AG04449 (cell line): ENCODE measurements at regions of chr7 and their contacts with region 1.

Region 1: DNA sequence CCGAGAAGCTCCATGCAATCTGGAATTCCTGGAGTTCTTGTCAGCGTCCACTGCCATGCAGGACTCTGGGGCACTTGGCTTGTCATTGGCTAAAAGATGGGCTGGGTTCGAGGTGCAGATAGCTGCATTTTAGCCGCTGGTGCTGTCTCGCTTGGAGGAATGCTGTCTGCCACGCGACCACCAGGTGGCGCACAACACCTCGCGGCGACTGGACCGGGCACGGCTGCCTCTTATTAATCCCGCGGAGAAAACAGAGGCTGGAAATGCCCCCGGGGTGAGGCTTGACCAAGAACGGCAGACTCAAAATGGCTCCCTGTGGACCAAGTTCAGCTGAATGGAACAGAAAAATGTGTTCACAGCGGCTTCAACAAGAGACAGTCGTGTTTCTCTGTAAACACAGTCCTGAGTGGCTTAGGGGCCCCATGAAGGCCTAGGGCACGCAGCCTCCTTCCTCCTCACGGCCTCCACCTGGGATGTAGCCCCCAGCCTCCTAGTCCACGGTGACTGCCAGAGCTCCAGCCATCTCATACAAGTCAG is 46.2 kb downstream of the AOC1 start:
- DNase-seq: no peak
- H3K4me3 ChIP-seq: no peak overlapping the region
- CTCF ChIP-seq: peak; percentile 95

Region 2: DNA sequence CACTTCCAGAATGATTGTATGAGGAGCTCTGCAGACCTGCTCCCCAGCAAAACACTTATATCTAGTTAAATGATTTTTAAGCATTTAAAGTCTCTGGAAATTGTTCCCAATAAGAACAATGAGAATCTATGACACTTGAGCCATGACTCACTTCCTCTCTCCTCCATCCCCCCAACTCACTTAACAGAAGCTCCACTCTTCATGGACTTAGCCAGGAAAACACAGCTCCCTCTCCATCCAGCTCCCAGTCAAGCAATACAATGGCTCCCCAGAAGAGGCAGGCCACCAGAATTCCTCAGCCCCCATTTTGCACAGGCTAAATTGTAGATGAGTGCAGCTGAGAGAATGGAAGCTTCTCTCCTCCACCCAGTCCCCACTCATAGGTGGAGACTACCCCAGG is 19.2 kb before region 1 on chr7:
- CTCF ChIA-PET with region 1: interaction called, 25 read pairs
- POLR2A ChIA-PET with region 1: no interaction called
- DNase-seq: no peak
- H3K4me3 ChIP-seq: no peak overlapping the region
- CTCF ChIP-seq: no peak

Region 3: GRCh38 chr7:150909200-150909995 is 10.9 kb after region 1 on chr7:
- CTCF ChIA-PET with region 1: interaction called, 25 read pairs
- POLR2A ChIA-PET with region 1: no interaction called
- DNase-seq: no peak
- H3K4me3 ChIP-seq: no peak overlapping the region
- CTCF ChIP-seq: no peak

Region 4: DNA sequence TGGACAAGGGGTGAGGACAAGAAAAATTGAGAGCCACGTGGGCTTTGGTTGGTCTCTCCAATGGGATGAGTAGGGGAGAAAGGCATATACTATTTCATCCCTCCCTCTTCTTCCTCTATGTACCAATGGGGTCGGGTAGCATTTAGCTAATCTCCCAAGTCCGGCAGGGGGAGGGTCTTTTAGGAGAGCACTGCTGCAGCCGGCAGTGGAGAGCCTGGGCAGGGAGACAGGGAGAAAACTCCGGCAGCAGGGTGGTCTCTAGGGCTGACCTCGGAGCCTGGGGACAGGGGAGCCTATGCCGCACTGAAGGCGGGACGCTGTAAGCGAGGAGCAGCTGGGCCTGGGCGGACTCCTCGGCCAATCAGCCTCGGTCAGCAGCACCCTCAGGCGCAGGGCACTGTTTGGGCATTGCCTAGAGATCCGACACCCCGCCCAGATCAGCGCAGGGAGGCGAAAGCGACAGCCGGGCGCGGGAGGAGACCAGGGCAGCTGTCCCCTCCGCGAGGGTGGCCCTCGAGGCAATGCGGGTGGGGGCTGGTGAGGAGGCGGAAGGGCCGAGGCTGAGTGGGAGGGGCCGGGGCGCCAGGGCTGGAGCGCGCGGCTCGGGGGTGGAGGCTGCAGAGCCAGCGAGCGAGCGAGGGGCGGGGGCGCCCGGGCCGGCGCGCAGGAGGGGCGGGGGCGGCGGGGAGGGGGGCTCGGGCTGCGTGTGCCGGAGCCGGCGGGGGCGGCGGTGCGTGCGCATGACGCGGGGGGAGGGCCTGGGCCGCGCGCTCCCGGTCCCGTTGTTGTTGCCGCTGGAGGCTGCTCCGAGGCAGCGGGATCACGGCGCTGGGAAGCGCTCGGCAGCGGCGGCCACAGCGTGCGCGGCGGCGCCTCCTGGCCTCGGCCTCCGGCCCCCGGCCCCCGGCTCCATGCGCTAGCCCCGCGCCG is 187.4 kb after region 1 on chr7 and contains the start of gene AGAP3:
- CTCF ChIA-PET with region 1: no interaction called
- POLR2A ChIA-PET with region 1: no interaction called
- DNase-seq: no peak
- H3K4me3 ChIP-seq: peak within 1 kb of the TSS; percentile 75
- CTCF ChIP-seq: no peak

Region 5: DNA sequence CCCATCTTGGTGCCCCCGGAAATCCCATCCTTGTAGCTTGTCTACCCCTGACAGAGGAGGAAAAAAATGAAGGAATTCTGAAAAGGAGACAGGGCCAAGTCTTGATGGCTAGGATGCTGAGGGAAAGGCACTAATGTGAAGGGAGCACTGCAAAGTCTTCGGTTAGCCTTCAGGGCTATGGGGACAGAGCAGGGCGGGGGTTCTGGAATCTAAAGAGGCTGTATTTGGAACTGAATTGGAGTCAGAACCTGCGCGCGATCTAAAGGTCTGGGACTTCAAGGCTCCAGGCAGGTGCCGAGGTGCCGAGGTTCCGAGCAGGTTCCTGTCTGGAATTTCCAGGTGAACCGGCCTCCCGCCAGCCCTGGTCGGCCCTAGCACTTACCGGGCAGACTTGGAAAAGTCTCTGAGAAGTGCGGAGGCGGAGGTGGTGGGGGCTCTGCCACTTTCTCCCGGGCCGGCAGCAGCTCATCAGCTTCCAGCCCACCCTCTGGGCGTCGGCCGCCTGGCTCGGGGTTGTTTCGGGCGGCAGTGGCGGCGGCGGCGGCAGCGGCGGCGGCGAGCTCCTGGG is 268.2 kb after region 1 on chr7:
- CTCF ChIA-PET with region 1: interaction called, 10 read pairs
- POLR2A ChIA-PET with region 1: no interaction called
- DNase-seq: no peak
- H3K4me3 ChIP-seq: no peak overlapping the region; the same call in 1 of the 2 replicates
- CTCF ChIP-seq: no peak